SK-N-SH (cell line): ENCODE measurements at regions of chr17 and their contacts with region 1.

Region 1: GRCh38 chr17:64320613-64321553 is 57.8 kb upstream of the TEX2 start:
- DNase-seq: peak; percentile 88
- H3K4me3 ChIP-seq: no peak overlapping the region
- H3K27ac ChIP-seq: no peak overlapping the region
- H3K4me1 ChIP-seq: no peaks in the 10 kb centered on the region
- H3K27me3 ChIP-seq: no peaks in the 10 kb centered on the region
- CTCF ChIP-seq: peak; percentile 97
- EP300 ChIP-seq: no peak
- RAD21 ChIP-seq: peak; percentile 87

Region 2: GRCh38 chr17:64297467-64298098 is 23.3 kb before region 1 on chr17:
- CTCF ChIA-PET with region 1: interaction called, 13 read pairs
- POLR2A ChIA-PET with region 1: no interaction called
- DNase-seq: no peak
- H3K4me3 ChIP-seq: no peak overlapping the region
- H3K27ac ChIP-seq: no peak overlapping the region
- H3K4me1 ChIP-seq: no peaks in the 10 kb centered on the region
- H3K27me3 ChIP-seq: no peaks in the 10 kb centered on the region; the same call in 1 of the 2 replicates
- CTCF ChIP-seq: no peak
- EP300 ChIP-seq: no peak
- RAD21 ChIP-seq: no peak

Region 3: GRCh38 chr17:64331946-64332493 is 11.1 kb after region 1 on chr17:
- CTCF ChIA-PET with region 1: interaction called, 30 read pairs
- POLR2A ChIA-PET with region 1: no interaction called
- DNase-seq: no peak
- H3K4me3 ChIP-seq: no peak overlapping the region
- H3K27ac ChIP-seq: no peak overlapping the region
- H3K4me1 ChIP-seq: peaks cover 15 to 23% of the 10 kb centered on the region in 2 experiments; a peak in 2 of 4 replicates
- H3K27me3 ChIP-seq: no peaks in the 10 kb centered on the region
- CTCF ChIP-seq: no peak
- EP300 ChIP-seq: no peak
- RAD21 ChIP-seq: no peak

Region 4: DNA sequence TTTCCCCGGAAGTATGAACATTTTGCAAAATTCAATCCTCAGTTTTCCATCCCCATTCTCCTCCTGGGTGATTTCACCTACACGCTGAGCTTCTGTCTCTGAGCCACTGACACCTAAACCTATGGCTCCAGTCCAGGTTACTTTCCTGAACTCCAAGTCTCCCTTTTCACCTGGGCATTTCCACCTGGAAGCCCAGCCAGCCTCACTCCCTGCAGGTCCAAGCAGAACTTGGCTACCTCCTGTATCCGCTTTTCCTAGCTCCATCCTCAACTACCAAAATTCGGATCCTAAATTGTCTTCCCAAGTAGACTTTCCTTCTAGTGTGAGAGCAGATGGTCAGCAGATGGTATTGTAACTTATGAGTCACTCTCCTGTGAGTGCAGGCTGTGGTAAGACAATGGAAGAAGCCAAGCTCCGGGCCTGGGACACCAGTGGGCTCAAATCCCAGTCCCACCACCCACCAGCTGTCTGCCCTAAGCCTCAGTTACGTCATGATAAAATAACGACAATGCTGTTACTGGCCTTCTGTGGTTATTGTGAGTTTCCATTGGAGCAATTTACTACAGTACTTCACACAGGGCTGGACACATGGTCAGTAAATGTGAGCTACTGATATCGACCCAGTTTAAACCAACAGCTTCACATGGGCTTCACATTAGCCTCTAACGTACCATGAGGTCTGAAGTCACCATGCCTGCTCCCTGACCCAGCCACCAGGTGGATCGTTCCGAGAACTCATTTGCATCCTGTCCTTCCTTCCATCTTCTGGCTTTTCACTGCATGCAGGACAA is 36.5 kb after region 1 on chr17:
- CTCF ChIA-PET with region 1: interaction called, 34 read pairs
- POLR2A ChIA-PET with region 1: no interaction called
- DNase-seq: no peak
- H3K4me3 ChIP-seq: no peak overlapping the region
- H3K27ac ChIP-seq: peak overlapping the region in 1 of 2 experiments; percentile 79; a peak in 1 of 4 replicates
- H3K4me1 ChIP-seq: peaks cover 0 to 24% of the 10 kb centered on the region in 2 experiments; a peak in 3 of 4 replicates
- H3K27me3 ChIP-seq: no peaks in the 10 kb centered on the region
- CTCF ChIP-seq: no peak; the same call in 1 of the 2 replicates
- EP300 ChIP-seq: peak in 1 of 2 experiments; percentile 97; a peak in 2 of 4 replicates
- RAD21 ChIP-seq: no peak

Region 5: GRCh38 chr17:64406321-64407200 is 85.7 kb after region 1 on chr17:
- CTCF ChIA-PET with region 1: interaction called, 501 read pairs
- POLR2A ChIA-PET with region 1: no interaction called
- DNase-seq: no peak
- H3K4me3 ChIP-seq: no peak overlapping the region
- H3K27ac ChIP-seq: no peak overlapping the region
- H3K4me1 ChIP-seq: no peaks in the 10 kb centered on the region
- H3K27me3 ChIP-seq: no peaks in the 10 kb centered on the region
- CTCF ChIP-seq: no peak
- EP300 ChIP-seq: no peak
- RAD21 ChIP-seq: no peak